Aorta (tissue), 5 donors: ENCODE measurements at regions of chr12 and their contacts with region 1.

Region 1: GRCh38 chr12:130044991-130045621 is 117.2 kb upstream of the FZD10 start:
- DNase-seq: no peak
- ATAC-seq: no peak
- H3K4me3 ChIP-seq: no peak overlapping the region
- H3K27ac ChIP-seq: no peak overlapping the region
- H3K4me1 ChIP-seq: no peaks in the 10 kb centered on the region
- H3K27me3 ChIP-seq: no peaks in the 10 kb centered on the region

Region 2: GRCh38 chr12:130100598-130101362 is 55.7 kb after region 1 on chr12:
- intact Hi-C with region 1: no loop called
- DNase-seq: no peak
- ATAC-seq: no peak
- H3K4me3 ChIP-seq: no peak overlapping the region
- H3K27ac ChIP-seq: no peak overlapping the region
- H3K4me1 ChIP-seq: no peaks in the 10 kb centered on the region
- H3K27me3 ChIP-seq: peaks cover 0 to 3% of the 10 kb centered on the region in 2 donors

Region 3: DNA sequence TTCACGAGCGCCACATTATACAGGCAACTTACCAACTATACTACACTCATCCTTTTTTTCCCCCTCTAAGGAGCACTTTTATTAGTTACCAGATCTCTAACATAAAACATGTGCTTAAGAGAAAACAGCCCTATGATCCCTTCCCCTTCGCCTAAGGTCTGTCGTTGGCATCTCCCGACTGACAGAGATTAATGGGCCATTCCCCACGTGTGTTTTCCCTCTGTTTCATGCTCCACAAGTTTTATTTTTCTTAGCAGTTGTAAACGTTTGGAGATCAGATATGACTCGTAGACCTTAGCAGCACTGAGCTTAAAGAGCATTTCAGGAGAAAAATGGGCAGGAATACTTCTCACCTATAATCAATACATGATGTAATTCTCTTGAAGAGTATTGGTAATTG is 65.8 kb after region 1 on chr12:
- intact Hi-C with region 1: no loop called
- DNase-seq: no peak
- ATAC-seq: no peak
- H3K4me3 ChIP-seq: no peak overlapping the region
- H3K27ac ChIP-seq: no peak overlapping the region
- H3K4me1 ChIP-seq: no peaks in the 10 kb centered on the region
- H3K27me3 ChIP-seq: peaks cover 0 to 1% of the 10 kb centered on the region in 2 donors

Region 4: DNA sequence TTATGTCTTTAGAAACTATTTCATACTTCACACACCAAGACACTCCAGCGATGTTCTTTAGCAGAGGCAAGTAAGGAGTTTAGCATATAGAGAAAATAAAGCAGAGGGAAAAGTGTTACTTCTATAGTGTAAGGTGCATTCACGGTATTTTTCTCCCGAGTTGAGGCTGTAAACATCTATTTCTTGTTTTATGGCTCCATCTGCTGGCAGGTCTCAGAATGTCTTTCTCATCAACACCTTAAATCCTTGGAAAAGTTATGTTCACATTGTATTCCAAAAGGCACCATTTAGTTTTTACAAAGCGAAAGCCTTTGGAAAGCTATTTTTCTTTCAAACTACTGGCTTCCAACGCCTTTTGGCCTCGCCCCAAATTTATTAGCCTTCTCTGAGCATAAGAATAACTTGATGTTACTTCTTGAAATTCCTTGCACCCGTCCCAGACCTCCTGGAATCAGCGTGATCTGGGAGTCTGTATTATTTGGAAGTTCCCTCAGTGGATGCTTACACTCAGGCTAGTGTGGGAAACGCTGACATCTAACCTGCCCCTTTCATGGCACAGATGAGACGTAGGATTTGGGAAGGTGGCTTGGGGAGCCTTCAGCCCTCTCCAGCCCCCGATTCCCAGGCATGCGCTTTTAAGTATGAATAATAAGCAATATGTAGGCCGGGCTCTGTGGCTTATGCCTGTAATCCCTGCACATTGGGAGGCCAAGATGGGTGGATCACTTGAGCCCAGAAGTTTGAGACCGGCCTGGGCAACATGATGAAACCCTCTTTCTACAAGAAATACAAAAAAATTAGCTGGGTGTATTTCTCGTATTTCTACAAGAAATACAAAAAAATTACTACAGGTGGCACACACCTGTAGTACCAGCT is 290.6 kb after region 1 on chr12:
- intact Hi-C with region 1: loop called (anchors 2 kb)
- DNase-seq: no peak
- ATAC-seq: no peak
- H3K4me3 ChIP-seq: no peak overlapping the region
- H3K27ac ChIP-seq: no peak overlapping the region
- H3K4me1 ChIP-seq: no peaks in the 10 kb centered on the region
- H3K27me3 ChIP-seq: no peaks in the 10 kb centered on the region

Region 5: GRCh38 chr12:130552483-130552996 is 507.4 kb after region 1 on chr12:
- intact Hi-C with region 1: no loop called
- DNase-seq: no peak
- ATAC-seq: no peak
- H3K4me3 ChIP-seq: no peak overlapping the region
- H3K27ac ChIP-seq: no peak overlapping the region
- H3K4me1 ChIP-seq: no peaks in the 10 kb centered on the region
- H3K27me3 ChIP-seq: no peaks in the 10 kb centered on the region

Region 6: DNA sequence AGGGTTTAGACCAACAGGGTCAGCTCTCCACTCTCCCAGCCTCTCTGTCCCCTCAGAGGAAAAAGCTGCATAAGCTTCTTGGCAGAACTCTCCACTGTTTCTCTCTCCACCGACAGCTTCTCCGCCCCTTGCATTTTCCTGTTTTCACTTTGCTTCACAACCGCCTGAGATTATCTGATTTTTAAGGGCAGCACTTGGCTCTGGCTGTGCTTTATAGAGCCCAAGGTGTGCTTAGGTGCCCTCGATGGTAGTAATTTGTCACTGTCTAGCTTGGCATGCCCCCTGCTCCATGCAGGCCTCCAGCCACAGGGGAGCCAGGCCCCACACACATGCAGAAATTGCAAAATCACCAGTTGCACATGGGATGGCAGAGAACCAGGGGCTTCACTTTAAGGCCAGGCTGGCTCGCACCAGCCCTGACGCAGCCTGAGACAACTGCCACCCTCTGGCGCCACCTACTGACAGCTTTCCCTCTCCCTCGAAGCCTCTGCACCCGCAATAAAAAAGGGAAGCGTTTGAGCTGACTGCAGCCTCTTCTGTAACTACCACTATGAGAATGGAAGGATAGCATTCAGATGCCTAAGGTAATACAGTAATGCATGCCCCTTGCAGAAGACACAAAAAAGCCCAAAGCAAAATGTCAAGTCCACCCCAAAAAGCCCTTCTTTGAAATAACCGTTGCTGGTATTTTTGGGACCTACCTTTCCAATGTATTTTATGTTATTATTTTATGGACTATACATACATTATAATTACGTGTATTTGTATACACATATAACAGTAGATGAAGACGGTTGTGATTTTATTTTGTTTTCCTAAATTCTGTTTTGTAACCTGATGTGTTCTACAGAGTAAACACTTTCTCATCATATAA is 703.0 kb after region 1 on chr12:
- intact Hi-C with region 1: loop called in 1 of 2 experiments (anchors 5 kb)
- DNase-seq: peak; percentile 86 to 93
- ATAC-seq: peak; percentile 85
- H3K4me3 ChIP-seq: no peak overlapping the region
- H3K27ac ChIP-seq: no peak overlapping the region
- H3K4me1 ChIP-seq: no peaks in the 10 kb centered on the region
- H3K27me3 ChIP-seq: no peaks in the 10 kb centered on the region